Panc1 (cell line): ENCODE measurements at regions of chr5 and their contacts with region 1.

Region 1: DNA sequence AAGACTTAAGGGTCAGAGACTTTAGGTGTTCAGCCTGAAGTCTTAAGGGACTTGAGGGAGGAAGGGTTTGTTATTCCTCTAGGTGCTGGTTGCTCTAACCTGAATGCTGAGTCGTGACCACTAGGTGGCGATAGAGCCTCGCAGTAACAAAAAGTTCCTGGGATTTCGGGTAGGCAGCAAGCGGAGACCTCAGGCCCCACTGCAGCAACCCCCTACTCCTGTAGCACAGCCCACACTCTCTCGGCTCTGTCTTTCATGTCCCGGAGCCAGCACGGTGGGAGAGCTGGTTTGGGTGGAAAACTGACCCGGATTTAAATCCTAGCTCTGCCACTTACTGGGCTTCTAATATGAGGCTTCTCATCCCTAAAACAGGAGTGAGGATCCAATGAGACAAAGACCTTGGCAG is 100.3 kb upstream of the PANK3 start:
- DNase-seq: peak; percentile 68
- ATAC-seq: peak; percentile 87
- H3K4me3 ChIP-seq: no peak overlapping the region
- H3K27ac ChIP-seq: no peak overlapping the region
- H3K4me1 ChIP-seq: no peaks in the 10 kb centered on the region
- H3K27me3 ChIP-seq: no peaks in the 10 kb centered on the region
- CTCF ChIP-seq: peak; percentile 94

Region 2: DNA sequence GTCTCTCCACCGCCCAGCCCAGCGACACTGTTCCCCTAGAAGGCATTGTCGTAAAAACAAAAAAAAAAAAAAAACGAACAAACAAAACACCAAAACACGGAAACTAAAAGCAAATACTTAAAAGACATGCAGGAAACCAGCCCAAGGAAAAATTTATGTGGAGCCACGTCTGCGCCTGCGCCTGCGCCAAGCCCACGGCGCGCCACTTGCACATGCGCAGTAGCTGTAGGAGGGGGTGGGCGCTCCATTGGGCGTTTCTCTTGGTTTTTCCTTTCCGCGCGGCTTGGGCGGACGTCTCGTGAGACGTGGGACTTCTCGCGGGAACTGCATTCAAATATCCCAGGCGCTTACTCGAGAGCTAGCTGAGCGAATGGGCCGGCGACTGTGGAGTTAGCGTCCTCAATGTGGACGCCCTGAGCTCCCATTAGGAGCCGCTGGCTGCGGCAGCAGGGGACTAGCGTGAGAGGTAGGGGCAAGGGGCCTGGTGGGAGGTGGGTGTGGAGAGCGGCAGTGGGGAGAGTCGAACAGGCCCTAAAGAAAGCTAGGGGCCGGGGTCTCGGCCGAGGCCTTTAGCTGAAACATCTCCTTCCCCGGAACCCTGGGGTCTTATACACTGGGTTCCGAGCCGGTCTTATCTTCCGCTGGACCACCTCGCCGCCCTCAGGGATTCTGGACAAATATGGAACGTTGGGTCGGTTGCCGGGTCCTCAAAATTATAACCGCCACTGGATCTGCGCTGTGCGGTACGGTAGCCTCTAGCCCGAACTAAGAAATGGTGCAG is 904.1 kb after region 1 on chr5 and contains the start of gene SPDL1:
- CTCF ChIA-PET with region 1: interaction called, 5 read pairs
- POLR2A ChIA-PET with region 1: no interaction called
- in situ Hi-C with region 1: no loop called
- intact Hi-C with region 1: loop called (anchors 2 kb)
- DNase-seq: peak; percentile 90
- ATAC-seq: peak; percentile 93
- H3K4me3 ChIP-seq: peak within 1 kb of the TSS; percentile 86 to 88
- H3K27ac ChIP-seq: peak within 1 kb of the TSS; percentile 97
- H3K4me1 ChIP-seq: peaks cover 38% of the 10 kb centered on the region
- H3K27me3 ChIP-seq: no peaks in the 10 kb centered on the region
- CTCF ChIP-seq: no peak
- total RNA-seq, gene SPDL1: 72.6 TPM

Region 3: DNA sequence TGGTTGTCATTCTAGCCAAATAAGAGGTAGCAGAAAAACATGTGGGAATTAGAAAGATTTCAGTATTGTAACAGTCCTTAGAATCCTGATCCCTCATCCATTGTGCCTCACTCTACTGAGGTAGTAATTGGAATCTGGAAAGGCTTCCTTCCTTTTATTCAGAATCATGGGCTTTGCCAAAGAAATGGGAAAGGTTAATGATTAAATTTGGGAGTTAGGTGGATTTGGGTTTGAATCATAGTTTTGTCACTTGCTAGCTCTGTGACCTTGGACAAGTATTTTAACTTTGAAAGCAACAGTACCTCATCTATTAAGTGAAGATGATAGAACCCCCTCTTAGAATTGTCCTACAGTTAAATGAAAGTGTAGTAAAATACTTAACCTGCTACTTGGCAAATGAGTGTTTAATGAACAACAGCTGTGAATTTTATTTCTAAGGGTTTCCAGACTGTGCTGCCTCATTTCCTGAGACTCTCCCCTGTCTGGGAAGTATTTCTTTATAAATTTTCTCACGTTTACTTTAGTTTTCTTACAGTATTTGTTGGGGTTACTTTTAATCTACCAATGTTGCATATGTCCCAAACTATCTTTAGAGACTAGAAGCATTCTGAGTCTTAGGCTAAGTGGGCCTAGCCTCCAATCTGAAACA is 915.8 kb after region 1 on chr5:
- CTCF ChIA-PET with region 1: no interaction called
- POLR2A ChIA-PET with region 1: no interaction called
- in situ Hi-C with region 1: no loop called
- intact Hi-C with region 1: no loop called
- DNase-seq: no peak
- ATAC-seq: no peak
- H3K4me3 ChIP-seq: no peak overlapping the region
- H3K27ac ChIP-seq: no peak overlapping the region
- H3K4me1 ChIP-seq: peaks cover 2% of the 10 kb centered on the region; the same call in 1 of the 2 replicates
- H3K27me3 ChIP-seq: no peaks in the 10 kb centered on the region
- CTCF ChIP-seq: no peak